ENCODE measurements at regions of chr6 and their contacts with region 1.

Region 1: GRCh38 chr6:46221222-46221793 is 50.5 kb upstream of the ENPP5 start:
- DNase-seq: no peak
- H3K4me3 ChIP-seq: no peak overlapping the region
- H3K27ac ChIP-seq: no peak overlapping the region
- H3K4me1 ChIP-seq: no peaks in the 10 kb centered on the region
- H3K27me3 ChIP-seq: no peaks in the 10 kb centered on the region
- CTCF ChIP-seq: peak; percentile 84

Region 2: GRCh38 chr6:46042355-46042999 is 178.8 kb before region 1 on chr6:
- intact Hi-C with region 1: loop called (anchors 10 kb)
- DNase-seq: peak; percentile 48
- H3K4me3 ChIP-seq: no peak overlapping the region
- H3K27ac ChIP-seq: no peak overlapping the region
- H3K4me1 ChIP-seq: no peaks in the 10 kb centered on the region
- H3K27me3 ChIP-seq: no peaks in the 10 kb centered on the region
- CTCF ChIP-seq: peak; percentile 63

Region 3: GRCh38 chr6:46090115-46091079 is 130.9 kb before region 1 on chr6:
- intact Hi-C with region 1: loop called (anchors 2 kb)
- DNase-seq: peak; percentile 61
- H3K4me3 ChIP-seq: no peak overlapping the region
- H3K27ac ChIP-seq: no peak overlapping the region
- H3K4me1 ChIP-seq: no peaks in the 10 kb centered on the region
- H3K27me3 ChIP-seq: no peaks in the 10 kb centered on the region
- CTCF ChIP-seq: peak; percentile 67

Region 4: GRCh38 chr6:46410334-46410953 is 189.1 kb after region 1 on chr6:
- intact Hi-C with region 1: loop called (anchors 2 kb)
- DNase-seq: peak; percentile 36
- H3K4me3 ChIP-seq: no peak overlapping the region
- H3K27ac ChIP-seq: no peak overlapping the region
- H3K4me1 ChIP-seq: no peaks in the 10 kb centered on the region
- H3K27me3 ChIP-seq: no peaks in the 10 kb centered on the region
- CTCF ChIP-seq: peak; percentile 55

Region 5: GRCh38 chr6:46626228-46626909 is 405.1 kb after region 1 on chr6:
- intact Hi-C with region 1: loop called (anchors 10 kb)
- DNase-seq: no peak
- H3K4me3 ChIP-seq: no peak overlapping the region
- H3K27ac ChIP-seq: no peak overlapping the region
- H3K4me1 ChIP-seq: no peaks in the 10 kb centered on the region
- H3K27me3 ChIP-seq: no peaks in the 10 kb centered on the region
- CTCF ChIP-seq: peak; percentile 52